ENCODE measurements at regions of chr16 and their contacts with region 1.

Region 1: GRCh38 chr16:53054670-53055485 is at the start of gene CHD9:
- DNase-seq: no peak
- H3K4me3 ChIP-seq: peak within 1 kb of the TSS; percentile 80
- CTCF ChIP-seq: peak; percentile 100

Region 2: GRCh38 chr16:52967744-52968143 is 87.1 kb before region 1 on chr16:
- CTCF ChIA-PET with region 1: no interaction called
- POLR2A ChIA-PET with region 1: no interaction called
- DNase-seq: no peak
- H3K4me3 ChIP-seq: no peak overlapping the region
- CTCF ChIP-seq: no peak

Region 3: GRCh38 chr16:53031323-53031942 is 23.4 kb before region 1 on chr16:
- CTCF ChIA-PET with region 1: no interaction called
- POLR2A ChIA-PET with region 1: no interaction called
- DNase-seq: no peak
- H3K4me3 ChIP-seq: no peak overlapping the region
- CTCF ChIP-seq: no peak

Region 4: DNA sequence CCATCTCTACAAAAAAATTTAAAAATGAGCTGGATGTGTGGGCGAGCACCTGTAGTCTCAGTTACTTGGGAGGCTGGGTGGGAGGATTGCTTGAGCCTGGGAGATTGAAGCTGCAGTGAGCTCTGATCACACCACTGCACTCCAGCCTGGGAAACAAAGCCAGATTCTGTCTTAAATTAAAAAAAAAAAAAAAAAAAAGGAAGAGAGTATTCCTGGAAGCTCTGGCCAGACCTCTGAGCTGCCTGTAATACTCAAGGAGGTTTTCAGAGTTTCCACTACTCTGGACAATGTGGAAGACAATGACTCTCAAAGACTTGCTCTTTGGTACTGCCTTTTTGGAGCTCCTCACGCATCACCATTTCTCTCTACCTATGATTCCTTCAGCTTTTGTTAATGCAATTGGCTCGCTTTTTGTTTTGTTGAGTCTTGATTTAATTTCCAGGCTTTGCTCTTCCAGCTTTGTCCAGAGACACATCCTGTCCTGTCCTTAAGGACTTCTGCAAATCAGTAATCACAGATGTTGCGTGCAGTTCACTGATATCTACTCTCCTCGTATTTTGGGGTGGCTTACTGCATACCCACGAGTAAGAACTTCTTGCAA is 10.7 kb after region 1 on chr16:
- CTCF ChIA-PET with region 1: interaction called, 26 read pairs
- POLR2A ChIA-PET with region 1: no interaction called
- DNase-seq: no peak
- H3K4me3 ChIP-seq: no peak overlapping the region
- CTCF ChIP-seq: no peak

Region 5: DNA sequence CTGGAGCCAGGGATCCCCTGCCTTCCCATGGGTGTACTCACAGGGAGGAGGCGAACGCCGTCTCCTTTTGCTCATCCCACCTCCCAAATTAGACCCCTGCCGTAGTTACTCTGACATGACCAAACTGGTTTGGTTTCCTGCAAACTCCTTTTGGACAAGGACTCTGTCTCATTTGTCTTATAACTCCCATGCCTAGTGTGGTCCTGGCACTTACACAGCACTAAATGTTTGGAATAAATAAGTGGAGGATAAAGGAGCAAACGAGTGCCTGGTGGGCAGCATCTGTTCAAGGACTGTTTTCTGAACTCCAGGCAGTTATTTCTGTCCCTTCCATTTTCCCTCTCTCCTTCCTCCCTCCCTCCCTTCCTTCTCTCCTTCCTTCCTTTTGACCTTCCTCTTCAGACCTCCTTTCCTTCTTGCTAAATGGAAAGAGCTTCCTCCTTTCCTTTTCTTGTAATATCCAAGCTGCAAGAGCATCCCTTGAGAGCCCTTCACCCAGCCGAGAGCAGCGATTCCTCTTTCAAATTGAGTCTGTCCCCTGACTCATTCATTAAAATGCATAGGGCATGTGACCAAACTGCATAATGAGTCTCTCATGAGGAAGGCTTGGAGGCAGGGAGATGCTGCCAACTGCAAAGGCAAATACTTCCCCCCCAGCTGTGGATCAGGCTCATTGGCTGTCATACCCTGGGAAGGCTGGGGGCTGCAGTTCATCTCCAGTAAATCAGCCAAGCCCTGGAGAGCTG is 36.8 kb after region 1 on chr16:
- CTCF ChIA-PET with region 1: interaction called, 11 read pairs
- POLR2A ChIA-PET with region 1: interaction called, 12 read pairs
- DNase-seq: peak; percentile 81
- H3K4me3 ChIP-seq: peak overlapping the region; percentile 21
- CTCF ChIP-seq: no peak

Region 6: GRCh38 chr16:53154513-53154912 is 99.6 kb after region 1 on chr16:
- CTCF ChIA-PET with region 1: interaction called, 63 read pairs
- POLR2A ChIA-PET with region 1: no interaction called
- DNase-seq: no peak
- H3K4me3 ChIP-seq: no peak overlapping the region
- CTCF ChIP-seq: no peak

Region 7: GRCh38 chr16:53166099-53166498 is 111.2 kb after region 1 on chr16:
- CTCF ChIA-PET with region 1: interaction called, 63 read pairs
- POLR2A ChIA-PET with region 1: no interaction called
- DNase-seq: no peak
- H3K4me3 ChIP-seq: no peak overlapping the region
- CTCF ChIP-seq: no peak